ENCODE measurements at regions of chr1 and their contacts with region 1.

Region 1: DNA sequence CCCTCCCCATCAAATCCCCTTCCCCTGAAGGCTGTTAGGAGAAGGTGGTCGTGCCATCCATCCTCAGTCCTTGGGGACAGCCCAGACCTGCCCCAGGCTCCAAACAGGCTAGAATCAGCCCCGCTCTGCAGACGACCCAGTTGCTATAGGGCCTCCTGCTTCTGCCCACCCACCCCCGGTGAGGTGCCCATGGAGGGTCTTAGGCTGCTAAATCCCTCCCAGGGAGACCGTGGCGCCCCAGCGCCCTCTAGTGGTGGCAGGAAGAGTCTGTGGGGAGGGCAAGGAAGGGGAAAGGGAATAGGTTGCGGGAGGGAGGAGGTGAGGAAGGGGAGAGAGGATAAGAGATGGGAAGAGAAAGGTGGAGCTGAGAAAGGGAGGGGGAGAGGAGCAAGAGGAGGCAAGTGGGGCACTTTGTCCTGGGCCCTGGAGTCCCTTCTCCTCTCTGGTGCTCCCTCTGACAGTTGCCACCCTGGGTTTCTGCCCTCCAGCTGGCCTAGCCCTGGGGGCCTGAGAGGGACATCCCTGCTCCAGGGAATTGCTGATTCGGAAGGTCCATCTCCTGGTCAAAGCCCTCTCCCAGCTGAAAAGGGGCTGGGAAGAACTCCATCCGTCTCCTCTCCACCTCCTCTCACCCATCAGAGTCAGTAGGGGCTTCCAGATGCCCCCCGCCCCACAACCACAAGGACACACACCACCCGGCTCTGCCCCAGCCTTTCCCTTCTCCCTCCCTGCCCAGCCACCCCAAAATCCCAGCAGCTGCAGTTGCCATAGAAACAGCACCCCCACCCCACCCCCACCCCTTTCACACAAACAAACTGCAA is 55.4 kb downstream of the CAMK2N1 start:
- DNase-seq: peak; percentile 71 to 81 (median 77)
- ATAC-seq: peak; percentile 94
- H3K4me3 ChIP-seq: no peak overlapping the region
- H3K27ac ChIP-seq: no peak overlapping the region
- H3K4me1 ChIP-seq: no peaks in the 10 kb centered on the region
- H3K27me3 ChIP-seq: peaks cover 16 to 58% of the 10 kb centered on the region in 2 experiments
- CTCF ChIP-seq: peak; percentile 85 to 90 (median 87)
- EP300 ChIP-seq: no peak
- POLR2A ChIP-seq: no peak
- RAD21 ChIP-seq: peak; percentile 59 to 84

Region 2: GRCh38 chr1:19918057-19918456 is 512.5 kb before region 1 on chr1:
- CTCF ChIA-PET with region 1: interaction called, 6 read pairs
- POLR2A ChIA-PET with region 1: no interaction called
- in situ Hi-C with region 1: no loop called
- intact Hi-C with region 1: loop called (anchors 5 kb)
- DNase-seq: peak; percentile 85 to 90 (median 86)
- ATAC-seq: peak; percentile 89
- H3K4me3 ChIP-seq: no peak overlapping the region
- H3K27ac ChIP-seq: no peak overlapping the region
- H3K4me1 ChIP-seq: peaks cover 0 to 6% of the 10 kb centered on the region in 2 experiments; a peak in 2 of 5 replicates
- H3K27me3 ChIP-seq: peaks cover 9 to 32% of the 10 kb centered on the region in 2 experiments; a peak in 4 of 5 replicates
- CTCF ChIP-seq: peak; percentile 94 to 97 (median 95)
- EP300 ChIP-seq: no peak
- POLR2A ChIP-seq: no peak
- RAD21 ChIP-seq: peak; percentile 94 to 98

Region 3: DNA sequence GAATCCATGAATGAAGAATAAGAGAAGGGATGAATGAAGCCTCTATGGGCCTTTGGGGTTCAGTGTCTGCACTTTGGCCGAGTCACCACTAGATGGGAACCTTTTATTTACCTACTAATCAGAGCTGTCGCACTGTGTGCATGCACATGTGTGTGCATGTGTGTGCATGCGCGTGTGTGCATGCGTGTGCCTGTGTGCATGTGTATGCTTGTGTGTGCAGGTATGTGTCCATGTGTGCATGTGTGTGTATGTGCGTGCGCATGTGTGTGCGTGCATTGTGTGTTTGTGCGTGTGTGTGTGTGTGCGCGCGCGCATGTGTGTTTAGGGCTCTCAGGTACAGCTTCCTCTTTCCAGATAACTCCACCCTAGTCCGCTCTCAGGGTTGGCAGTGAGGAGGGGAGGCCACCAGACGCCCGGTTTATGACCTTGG is 265.0 kb before region 1 on chr1:
- CTCF ChIA-PET with region 1: no interaction called
- POLR2A ChIA-PET with region 1: no interaction called
- in situ Hi-C with region 1: no loop called
- intact Hi-C with region 1: loop called (anchors 5 kb)
- DNase-seq: peak; percentile 46 to 66 (median 56)
- ATAC-seq: peak; percentile 86
- H3K4me3 ChIP-seq: no peak overlapping the region
- H3K27ac ChIP-seq: no peak overlapping the region
- H3K4me1 ChIP-seq: peaks cover 0 to 6% of the 10 kb centered on the region in 2 experiments; a peak in 2 of 5 replicates
- H3K27me3 ChIP-seq: peaks cover 0 to 19% of the 10 kb centered on the region in 2 experiments; a peak in 3 of 5 replicates
- CTCF ChIP-seq: peak; percentile 67 to 75 (median 70)
- EP300 ChIP-seq: no peak
- POLR2A ChIP-seq: no peak
- RAD21 ChIP-seq: peak in 1 of 2 experiments; percentile 87; a peak in 3 of 4 replicates

Region 4: GRCh38 chr1:20212685-20213331 is 217.8 kb before region 1 on chr1:
- CTCF ChIA-PET with region 1: interaction called, 3 read pairs
- POLR2A ChIA-PET with region 1: interaction called, 3 read pairs
- in situ Hi-C with region 1: no loop called
- intact Hi-C with region 1: loop called (anchors 2 kb)
- DNase-seq: peak; percentile 75 to 79 (median 77)
- ATAC-seq: peak; percentile 87
- H3K4me3 ChIP-seq: no peak overlapping the region
- H3K27ac ChIP-seq: no peak overlapping the region; the same call in 2 of the 3 replicates
- H3K4me1 ChIP-seq: peaks cover 21 to 23% of the 10 kb centered on the region in 2 experiments
- H3K27me3 ChIP-seq: peaks cover 0 to 14% of the 10 kb centered on the region in 2 experiments; a peak in 3 of 5 replicates
- CTCF ChIP-seq: peak; percentile 86 to 93 (median 90)
- EP300 ChIP-seq: no peak
- POLR2A ChIP-seq: no peak
- RAD21 ChIP-seq: peak; percentile 59 to 64

Region 5: GRCh38 chr1:20376880-20377494 is 53.6 kb before region 1 on chr1:
- CTCF ChIA-PET with region 1: no interaction called
- POLR2A ChIA-PET with region 1: no interaction called
- in situ Hi-C with region 1: no loop called
- intact Hi-C with region 1: loop called (anchors 5 kb)
- DNase-seq: peak; percentile 57 to 89 (median 81)
- ATAC-seq: peak; percentile 97
- H3K4me3 ChIP-seq: no peak overlapping the region
- H3K27ac ChIP-seq: no peak overlapping the region
- H3K4me1 ChIP-seq: no peaks in the 10 kb centered on the region
- H3K27me3 ChIP-seq: peaks cover 0 to 27% of the 10 kb centered on the region in 2 experiments; a peak in 2 of 5 replicates
- CTCF ChIP-seq: peak; percentile 77 to 90 (median 85)
- EP300 ChIP-seq: no peak
- POLR2A ChIP-seq: no peak
- RAD21 ChIP-seq: peak; percentile 33 to 63; a peak in 3 of 4 replicates

Measured in K562 (cell line).